A549 (cell line): ENCODE measurements at regions of chr12 and their contacts with region 1.

Region 1: GRCh38 chr12:118035246-118036041 is 18.9 kb downstream of the RFC5 start:
- DNase-seq: peak in 1 of 2 experiments; percentile 62
- ATAC-seq: peak; percentile 83 to 85
- H3K4me3 ChIP-seq: no peak overlapping the region
- H3K27ac ChIP-seq: peak overlapping the region in 1 of 2 experiments; percentile 23; a peak in 1 of 6 replicates
- H3K4me1 ChIP-seq: peaks cover 15% of the 10 kb centered on the region; the same call in 2 of the 3 replicates
- CTCF ChIP-seq: no peak
- EP300 ChIP-seq: no peak
- POLR2A ChIP-seq: no peak
- RAD21 ChIP-seq: no peak

Region 2: GRCh38 chr12:117869551-117869950 is 165.9 kb before region 1 on chr12:
- CTCF ChIA-PET with region 1: interaction called, 203 read pairs
- POLR2A ChIA-PET with region 1: no interaction called
- DNase-seq: no peak
- ATAC-seq: no peak
- H3K4me3 ChIP-seq: no peak overlapping the region
- H3K27ac ChIP-seq: no peak overlapping the region
- H3K4me1 ChIP-seq: no peaks in the 10 kb centered on the region
- CTCF ChIP-seq: no peak
- EP300 ChIP-seq: no peak
- POLR2A ChIP-seq: no peak
- RAD21 ChIP-seq: no peak

Region 3: DNA sequence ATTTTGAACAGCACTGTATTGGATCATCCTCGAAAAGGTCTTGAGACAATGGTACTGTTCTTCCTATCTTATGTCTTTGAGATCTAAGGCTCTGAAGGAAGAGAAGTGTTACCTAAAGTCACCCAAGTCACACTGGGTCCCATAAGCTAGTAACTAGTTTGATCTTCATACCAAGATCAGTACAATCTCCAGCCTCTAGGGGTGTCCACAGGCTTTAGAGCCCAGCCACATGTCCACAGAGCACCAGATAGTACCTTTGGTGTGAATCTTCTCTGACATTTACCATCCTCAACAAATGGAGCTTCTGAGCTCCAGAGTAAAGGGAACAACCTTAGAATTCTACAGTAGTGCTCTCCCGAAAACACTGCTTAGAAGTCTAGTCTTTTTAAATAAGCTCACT is 145.3 kb before region 1 on chr12:
- CTCF ChIA-PET with region 1: interaction called, 10 read pairs
- POLR2A ChIA-PET with region 1: no interaction called
- DNase-seq: peak; percentile 34 to 40
- ATAC-seq: peak; percentile 89 to 96
- H3K4me3 ChIP-seq: no peak overlapping the region
- H3K27ac ChIP-seq: no peak overlapping the region
- H3K4me1 ChIP-seq: no peaks in the 10 kb centered on the region
- CTCF ChIP-seq: no peak
- EP300 ChIP-seq: no peak
- POLR2A ChIP-seq: no peak
- RAD21 ChIP-seq: peak in 1 of 2 experiments; percentile 30; a peak in 1 of 5 replicates

Region 4: GRCh38 chr12:118025168-118025567 is 10.3 kb before region 1 on chr12:
- CTCF ChIA-PET with region 1: interaction called, 10 read pairs
- POLR2A ChIA-PET with region 1: no interaction called
- DNase-seq: no peak
- ATAC-seq: no peak
- H3K4me3 ChIP-seq: no peak overlapping the region
- H3K27ac ChIP-seq: no peak overlapping the region
- H3K4me1 ChIP-seq: no peaks in the 10 kb centered on the region
- CTCF ChIP-seq: no peak
- EP300 ChIP-seq: no peak
- POLR2A ChIP-seq: no peak
- RAD21 ChIP-seq: no peak

Region 5: GRCh38 chr12:118061011-118061875 is 25.8 kb after region 1 on chr12 and contains the start of gene WSB2:
- CTCF ChIA-PET with region 1: interaction called, 10 read pairs
- POLR2A ChIA-PET with region 1: interaction called, 8 read pairs
- DNase-seq: peak; percentile 49 to 56
- ATAC-seq: peak; percentile 41 to 48
- H3K4me3 ChIP-seq: peak within 1 kb of the TSS; percentile 87
- H3K27ac ChIP-seq: peak within 1 kb of the TSS; percentile 98 to 100
- H3K4me1 ChIP-seq: peaks cover 51% of the 10 kb centered on the region
- CTCF ChIP-seq: no peak
- EP300 ChIP-seq: no peak
- POLR2A ChIP-seq: peak; percentile 49
- RAD21 ChIP-seq: no peak
- polyA plus RNA-seq, gene WSB2: 93.5 and 121 TPM in 2 replicates